ENCODE measurements at regions of chrX and their contacts with region 1.

Region 1: DNA sequence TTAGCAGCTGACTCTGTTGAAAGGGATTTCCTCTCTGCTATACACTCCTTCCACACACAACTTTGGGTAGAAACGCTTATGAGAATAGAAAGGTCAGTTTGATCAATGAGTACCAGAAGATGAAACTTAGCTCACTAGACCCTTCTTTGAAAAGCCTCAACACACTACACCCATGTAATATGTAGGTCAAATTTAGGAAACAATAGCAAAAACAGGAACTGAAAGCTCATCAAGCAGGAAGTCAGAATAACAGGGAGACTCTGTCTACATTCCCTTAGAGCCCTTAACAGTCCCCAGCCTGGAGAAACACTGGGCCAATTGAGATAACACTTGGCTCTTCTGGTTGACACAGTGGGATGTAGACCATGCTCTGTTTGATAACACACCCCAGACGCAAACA is 30.7 kb downstream of the SRPX2 start:
- DNase-seq: no peak
- H3K4me3 ChIP-seq: no peak overlapping the region
- H3K27ac ChIP-seq: no peak overlapping the region
- H3K4me1 ChIP-seq: no peaks in the 10 kb centered on the region
- H3K27me3 ChIP-seq: no peaks in the 10 kb centered on the region
- CTCF ChIP-seq: no peak
- EP300 ChIP-seq: no peak
- POLR2A ChIP-seq: no peak
- RAD21 ChIP-seq: no peak

Region 2: DNA sequence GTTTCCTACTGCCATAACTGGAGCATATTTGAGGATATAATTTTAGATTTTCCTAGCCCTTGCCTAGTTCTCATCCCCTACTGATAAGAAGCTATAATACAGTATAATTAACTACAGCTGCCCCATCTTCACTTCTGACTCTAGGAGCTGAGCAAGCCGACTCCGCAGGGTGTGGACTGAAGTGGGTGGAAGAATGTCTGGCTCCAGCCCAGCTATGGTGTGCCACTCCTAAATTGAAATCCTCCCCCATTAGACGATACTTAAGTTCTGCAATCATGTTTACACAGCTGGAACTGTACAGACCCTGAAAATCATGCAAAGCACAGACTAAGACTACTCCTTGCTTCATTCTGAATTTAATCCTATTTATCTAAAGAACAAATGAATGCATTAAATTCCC is 357.7 kb before region 1 on chrX:
- CTCF ChIA-PET with region 1: no interaction called
- POLR2A ChIA-PET with region 1: no interaction called
- DNase-seq: no peak
- H3K4me3 ChIP-seq: no peak overlapping the region
- H3K27ac ChIP-seq: no peak overlapping the region
- H3K4me1 ChIP-seq: no peaks in the 10 kb centered on the region
- H3K27me3 ChIP-seq: no peaks in the 10 kb centered on the region
- CTCF ChIP-seq: no peak
- EP300 ChIP-seq: no peak
- POLR2A ChIP-seq: no peak
- RAD21 ChIP-seq: no peak

Region 3: GRCh38 chrX:100649550-100650356 is 25.0 kb before region 1 on chrX:
- CTCF ChIA-PET with region 1: interaction called, 22 read pairs
- POLR2A ChIA-PET with region 1: no interaction called
- DNase-seq: no peak
- H3K4me3 ChIP-seq: no peak overlapping the region
- H3K27ac ChIP-seq: no peak overlapping the region
- H3K4me1 ChIP-seq: peaks cover 0 to 10% (median 4%) of the 10 kb centered on the region in 4 experiments; a peak in 3 of 7 replicates
- H3K27me3 ChIP-seq: no peaks in the 10 kb centered on the region
- CTCF ChIP-seq: no peak
- EP300 ChIP-seq: no peak
- POLR2A ChIP-seq: no peak
- RAD21 ChIP-seq: no peak

Measured in H1 (cell line).